SK-N-SH (cell line): ENCODE measurements at regions of chr9 and their contacts with region 1.

Region 1: DNA sequence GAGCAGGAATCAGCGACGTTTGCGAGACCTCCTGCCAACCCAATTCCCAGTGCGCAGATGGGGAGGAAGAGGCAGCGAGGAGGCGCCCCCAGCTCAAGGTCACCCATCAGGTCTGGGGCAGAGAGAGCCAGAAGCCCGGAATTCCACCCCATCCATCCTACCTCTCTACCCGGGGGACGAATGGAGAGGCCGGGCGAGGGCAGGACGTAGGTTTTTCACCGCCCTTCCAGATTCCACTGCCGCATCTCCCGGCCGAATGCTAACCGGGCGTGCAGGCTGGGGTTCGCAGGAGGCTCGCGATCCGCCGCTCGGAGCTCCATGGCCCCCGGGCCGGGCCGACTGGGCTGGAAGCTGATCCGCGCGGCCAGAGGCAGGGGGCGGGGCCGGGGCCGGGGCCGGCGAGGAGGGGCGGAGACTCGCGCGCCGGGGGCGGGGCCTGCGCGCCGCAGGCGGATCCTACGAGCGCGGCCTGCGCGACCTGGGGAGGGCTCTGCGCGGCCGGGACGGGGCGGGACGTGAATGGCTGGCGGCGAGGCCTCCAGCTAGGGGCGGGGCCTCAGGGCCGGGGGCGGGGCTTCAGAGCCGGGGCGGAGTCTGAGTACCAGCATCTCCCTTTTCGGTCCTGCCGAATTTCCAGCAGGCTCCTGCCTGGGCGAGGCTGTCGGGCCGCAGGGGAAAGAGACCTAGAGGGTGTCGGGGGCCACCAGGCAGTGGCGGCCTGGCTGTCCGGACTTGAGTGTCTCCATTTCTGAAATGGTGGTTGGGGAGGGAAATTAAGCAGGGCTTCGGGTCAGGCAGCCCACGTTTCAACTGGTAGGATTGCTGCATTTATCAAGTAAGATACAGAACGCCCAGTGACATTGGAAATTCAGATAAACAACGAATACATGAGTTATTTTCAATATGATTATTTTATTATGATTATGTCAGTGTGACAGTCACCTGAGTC is at the start of gene ST6GALNAC4:
- DNase-seq: peak; percentile 98
- H3K4me3 ChIP-seq: peak within 1 kb of the TSS; percentile 56 to 84
- H3K27ac ChIP-seq: peak within 1 kb of the TSS; percentile 58 to 95
- H3K4me1 ChIP-seq: peaks cover 20 to 35% of the 10 kb centered on the region in 2 experiments; a peak in 3 of 4 replicates
- H3K27me3 ChIP-seq: no peaks in the 10 kb centered on the region
- CTCF ChIP-seq: no peak
- EP300 ChIP-seq: no peak
- RAD21 ChIP-seq: no peak
- polyA plus RNA-seq, gene ST6GALNAC4: 28.4 and 30.2 TPM in 2 replicates

Region 2: DNA sequence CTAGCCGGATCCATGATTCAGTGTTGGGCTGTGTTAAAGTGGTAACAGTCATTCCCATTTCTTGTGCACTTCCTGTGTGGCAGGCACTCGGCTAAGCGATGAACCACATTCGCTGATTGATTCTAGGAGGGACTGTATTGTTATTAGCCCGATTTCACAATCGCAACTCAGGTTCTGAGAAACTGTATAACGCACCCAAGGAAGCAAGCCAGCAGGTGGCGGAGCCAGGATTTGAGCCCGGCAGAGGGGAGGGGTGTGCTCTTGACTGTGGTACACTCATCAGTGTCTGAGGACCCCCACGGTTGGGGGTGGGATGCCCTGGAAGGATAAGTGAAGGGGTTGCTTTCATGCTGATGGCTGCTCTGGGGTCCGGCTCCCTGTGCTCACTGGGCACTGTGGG is 430.9 kb before region 1 on chr9:
- CTCF ChIA-PET with region 1: no interaction called
- POLR2A ChIA-PET with region 1: no interaction called
- DNase-seq: no peak
- H3K4me3 ChIP-seq: no peak overlapping the region
- H3K27ac ChIP-seq: no peak overlapping the region
- H3K4me1 ChIP-seq: no peaks in the 10 kb centered on the region
- H3K27me3 ChIP-seq: no peaks in the 10 kb centered on the region
- CTCF ChIP-seq: no peak
- EP300 ChIP-seq: no peak
- RAD21 ChIP-seq: no peak

Region 3: DNA sequence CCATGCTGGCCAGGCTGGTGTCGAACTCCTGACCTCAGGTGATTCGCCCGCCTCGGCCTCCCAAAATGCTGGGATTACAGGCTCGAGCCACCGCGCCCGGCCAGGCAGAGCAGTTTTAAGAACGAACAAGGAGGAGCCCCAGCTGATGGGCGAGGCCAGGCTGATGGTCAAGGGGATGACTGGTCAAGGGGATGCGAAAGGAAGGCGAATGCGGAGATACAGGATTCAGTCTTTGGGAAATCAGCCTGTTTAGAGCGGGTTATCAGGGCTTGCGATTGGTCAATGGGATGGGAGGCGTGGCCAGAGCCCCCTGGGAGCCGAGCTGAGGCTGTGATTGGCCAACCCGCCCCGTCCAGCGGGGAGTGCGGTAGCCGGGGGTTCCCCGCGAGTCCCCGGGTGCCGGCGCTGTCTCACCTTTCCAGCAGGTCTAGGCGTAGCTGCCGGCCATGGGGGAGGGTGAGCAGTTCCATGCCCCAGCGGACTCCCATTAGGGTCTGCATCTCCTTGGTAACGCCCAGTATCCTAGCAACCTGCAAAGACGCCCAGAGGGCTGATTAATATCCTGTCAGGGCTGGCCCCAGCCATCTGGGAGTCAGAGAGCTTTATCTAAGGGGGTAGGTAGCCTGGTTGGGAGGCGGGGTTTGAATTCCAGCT is 174.4 kb before region 1 on chr9:
- CTCF ChIA-PET with region 1: interaction called, 18 read pairs
- POLR2A ChIA-PET with region 1: no interaction called
- DNase-seq: peak; percentile 81
- H3K4me3 ChIP-seq: no peak overlapping the region
- H3K27ac ChIP-seq: no peak overlapping the region
- H3K4me1 ChIP-seq: no peaks in the 10 kb centered on the region; a peak in 1 of 4 replicates
- H3K27me3 ChIP-seq: no peaks in the 10 kb centered on the region
- CTCF ChIP-seq: no peak
- EP300 ChIP-seq: no peak
- RAD21 ChIP-seq: no peak

Region 4: DNA sequence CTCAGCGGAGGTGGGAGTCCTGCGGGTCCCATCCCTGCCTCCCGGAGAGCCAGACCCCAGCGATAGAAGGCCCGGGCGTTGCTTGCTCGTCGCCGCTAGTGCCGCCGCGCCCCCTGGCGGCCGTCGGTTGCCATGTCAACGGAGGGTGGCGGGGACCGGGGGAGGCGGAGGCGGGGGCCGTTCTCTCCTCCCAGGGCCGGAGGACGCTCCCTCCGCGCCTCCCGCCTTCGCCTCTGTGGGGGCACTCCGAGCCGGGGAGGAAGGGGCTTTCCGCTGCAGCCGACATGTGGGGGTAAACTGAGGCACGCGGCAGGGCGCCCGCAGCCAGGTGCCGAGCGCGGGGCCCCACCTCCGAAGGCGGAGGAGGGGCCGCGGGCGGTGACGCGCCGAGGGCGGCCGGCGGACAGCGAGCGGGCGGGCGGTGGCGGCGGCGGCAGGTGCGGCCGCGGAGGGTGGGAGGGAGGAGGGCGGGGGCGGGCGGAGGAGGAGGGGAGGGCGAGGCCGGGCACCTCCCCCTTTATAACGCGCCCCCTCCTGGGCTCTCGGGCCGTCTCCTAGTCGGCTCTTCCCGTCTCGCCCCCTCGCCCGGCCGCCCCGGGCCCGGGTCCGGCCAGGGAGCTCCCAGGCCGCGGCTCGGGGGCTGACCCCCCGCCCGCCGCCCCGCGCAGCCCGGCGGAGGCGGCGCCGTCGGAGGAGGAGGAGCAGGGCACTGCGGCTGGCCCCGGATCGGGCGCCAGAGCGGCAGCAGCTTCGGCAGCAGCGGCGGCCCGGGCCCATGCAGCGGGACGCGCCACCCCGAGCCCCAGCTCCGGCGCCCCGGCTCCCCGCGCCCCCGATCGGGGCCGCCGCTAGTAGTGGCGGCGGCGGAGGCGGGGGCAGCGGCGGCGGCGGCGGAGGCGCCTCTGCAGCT is 131.7 kb before region 1 on chr9:
- CTCF ChIA-PET with region 1: interaction called, 24 read pairs
- POLR2A ChIA-PET with region 1: interaction called, 4 read pairs
- DNase-seq: peak; percentile 97
- H3K4me3 ChIP-seq: peak overlapping the region; percentile 82 to 90
- H3K27ac ChIP-seq: peak overlapping the region; percentile 47 to 92; a peak in 3 of 4 replicates
- H3K4me1 ChIP-seq: peaks cover 6 to 18% of the 10 kb centered on the region in 2 experiments
- H3K27me3 ChIP-seq: no peaks in the 10 kb centered on the region
- CTCF ChIP-seq: peak; percentile 79
- EP300 ChIP-seq: no peak
- RAD21 ChIP-seq: peak; percentile 80

Region 5: GRCh38 chr9:127838375-127839078 is 78.4 kb before region 1 on chr9:
- CTCF ChIA-PET with region 1: no interaction called
- POLR2A ChIA-PET with region 1: no interaction called
- DNase-seq: no peak
- H3K4me3 ChIP-seq: peak overlapping the region; percentile 12 to 40; a peak in 2 of 4 replicates
- H3K27ac ChIP-seq: peak overlapping the region; percentile 2 to 84
- H3K4me1 ChIP-seq: peaks cover 0 to 34% of the 10 kb centered on the region in 2 experiments; a peak in 3 of 4 replicates
- H3K27me3 ChIP-seq: no peaks in the 10 kb centered on the region
- CTCF ChIP-seq: no peak
- EP300 ChIP-seq: no peak; a peak in 1 of 4 replicates
- RAD21 ChIP-seq: no peak

Region 6: DNA sequence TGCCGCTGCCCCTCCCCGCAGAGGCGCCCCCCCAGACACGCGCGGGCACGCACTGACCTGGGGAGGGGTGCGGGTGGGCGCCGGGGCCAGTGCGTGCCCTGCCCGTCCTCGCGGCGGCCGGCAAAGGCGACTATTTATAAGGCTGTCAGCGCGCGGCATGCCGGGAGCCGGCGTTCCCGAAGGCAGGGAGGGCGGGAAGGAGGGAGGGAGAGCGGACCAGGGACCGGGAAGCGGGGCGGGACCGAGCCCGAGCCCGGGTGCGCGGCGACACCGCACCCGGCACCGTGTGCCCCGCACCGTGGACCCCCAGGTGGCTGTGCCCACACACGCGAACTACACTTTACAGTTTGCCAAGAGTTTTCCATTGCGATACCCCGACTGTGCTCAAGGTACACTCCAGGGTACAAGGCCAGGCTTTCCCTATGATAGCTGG is 39.4 kb before region 1 on chr9 and contains the start of gene AK1:
- CTCF ChIA-PET with region 1: interaction called, 31 read pairs
- POLR2A ChIA-PET with region 1: interaction called, 3 read pairs
- DNase-seq: peak; percentile 91
- H3K4me3 ChIP-seq: peak within 1 kb of the TSS; percentile 52 to 71
- H3K27ac ChIP-seq: peak within 1 kb of the TSS in 1 of 2 experiments; percentile 59; a peak in 1 of 4 replicates
- H3K4me1 ChIP-seq: peaks cover 9 to 39% of the 10 kb centered on the region in 2 experiments; a peak in 2 of 4 replicates
- H3K27me3 ChIP-seq: no peaks in the 10 kb centered on the region
- CTCF ChIP-seq: no peak
- EP300 ChIP-seq: no peak
- RAD21 ChIP-seq: no peak
- polyA plus RNA-seq, gene AK1: 103 and 125 TPM in 2 replicates

Region 7: DNA sequence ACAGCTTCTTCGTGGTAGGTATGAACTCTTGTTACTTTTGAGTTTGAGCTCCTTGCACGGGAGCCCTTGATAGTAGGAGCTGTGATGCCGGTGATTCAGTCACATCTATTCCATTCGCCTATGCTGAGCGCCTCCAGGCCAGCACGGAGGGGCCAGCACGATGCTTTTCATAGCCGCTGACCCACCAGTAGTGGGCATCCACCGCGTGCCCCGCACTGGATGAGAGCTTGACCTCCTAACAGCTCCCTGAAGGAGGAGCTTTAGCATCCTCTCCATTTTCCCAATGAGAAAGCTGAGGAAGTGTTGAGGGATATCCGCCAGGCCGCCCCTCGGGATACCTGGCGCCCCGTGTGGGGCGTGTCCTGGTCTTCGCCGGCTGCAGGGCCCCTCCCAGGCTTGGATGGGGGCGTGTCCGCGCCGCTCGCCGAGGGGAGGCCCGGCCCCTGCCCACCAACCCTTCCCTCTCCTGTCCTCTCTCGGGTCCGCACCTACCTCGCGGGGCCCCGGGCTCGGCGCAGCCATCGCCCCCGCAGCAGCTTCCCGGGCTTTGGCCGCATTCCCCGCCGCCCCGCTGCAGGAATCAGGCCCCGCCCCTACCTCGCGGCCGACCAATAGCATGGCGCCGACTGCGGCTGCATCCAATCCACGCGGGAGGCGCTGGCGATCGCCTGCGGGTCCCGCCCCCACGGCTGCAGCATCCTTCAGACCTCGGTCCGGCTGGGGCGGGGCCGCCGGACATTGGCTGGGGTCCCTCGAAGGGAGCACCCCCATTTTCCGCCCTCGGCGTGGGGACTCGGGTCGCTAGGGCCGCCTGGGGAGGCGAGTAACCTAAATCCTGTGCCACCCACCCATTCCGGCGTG is 13.5 kb after region 1 on chr9 and contains the start of gene PIP5KL1:
- CTCF ChIA-PET with region 1: interaction called, 13 read pairs
- POLR2A ChIA-PET with region 1: interaction called, 3 read pairs
- DNase-seq: peak; percentile 98
- H3K4me3 ChIP-seq: peak within 1 kb of the TSS; percentile 59 to 64
- H3K27ac ChIP-seq: peak within 1 kb of the TSS; percentile 80 to 91
- H3K4me1 ChIP-seq: peaks cover 7 to 31% of the 10 kb centered on the region in 2 experiments; a peak in 3 of 4 replicates
- H3K27me3 ChIP-seq: no peaks in the 10 kb centered on the region
- CTCF ChIP-seq: peak; percentile 40
- EP300 ChIP-seq: no peak
- RAD21 ChIP-seq: no peak
- polyA plus RNA-seq, gene PIP5KL1: 4.0 and 6.1 TPM in 2 replicates

Region 8: DNA sequence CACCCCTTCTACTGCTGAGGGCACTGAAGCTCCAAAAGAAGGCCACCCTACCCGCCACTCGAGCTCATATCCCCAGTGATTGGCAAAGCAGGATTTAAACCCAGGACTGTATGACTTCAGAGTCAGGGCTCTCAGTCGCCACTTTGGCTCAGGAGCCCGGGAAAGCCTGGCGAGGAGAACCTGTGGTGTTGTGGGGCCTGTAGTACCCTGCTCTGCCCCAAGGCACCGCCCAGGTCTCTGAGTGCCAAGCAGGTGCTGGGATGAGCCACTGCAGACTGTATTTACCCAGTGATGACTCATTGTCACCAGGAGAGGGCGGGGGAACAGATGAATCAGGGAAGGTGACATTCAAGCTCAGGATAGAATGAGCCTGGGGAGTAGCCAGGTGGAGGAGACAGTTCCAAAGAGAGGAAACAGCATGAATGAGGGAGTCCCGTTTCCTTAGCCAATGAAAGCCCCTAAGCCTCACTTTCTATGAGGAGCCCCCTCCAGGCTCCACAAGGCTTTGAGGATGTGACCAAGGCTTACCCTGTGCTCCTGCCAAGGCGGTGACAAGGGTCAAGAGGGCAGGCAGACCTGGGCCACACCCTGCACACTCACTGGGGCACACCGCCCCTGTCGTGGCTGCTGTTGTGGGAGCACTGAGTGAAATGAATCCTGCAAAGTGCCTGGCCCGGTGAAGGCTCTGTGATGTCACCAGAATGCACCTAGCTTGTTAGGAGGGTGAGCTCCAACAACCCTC is 38.5 kb after region 1 on chr9:
- CTCF ChIA-PET with region 1: no interaction called
- POLR2A ChIA-PET with region 1: no interaction called
- DNase-seq: peak; percentile 79
- H3K4me3 ChIP-seq: no peak overlapping the region
- H3K27ac ChIP-seq: peak overlapping the region in 1 of 2 experiments; percentile 54; a peak in 1 of 4 replicates
- H3K4me1 ChIP-seq: peaks cover 0 to 46% of the 10 kb centered on the region in 2 experiments; a peak in 2 of 4 replicates
- H3K27me3 ChIP-seq: no peaks in the 10 kb centered on the region
- CTCF ChIP-seq: no peak
- EP300 ChIP-seq: no peak
- RAD21 ChIP-seq: peak; percentile 59

Region 9: DNA sequence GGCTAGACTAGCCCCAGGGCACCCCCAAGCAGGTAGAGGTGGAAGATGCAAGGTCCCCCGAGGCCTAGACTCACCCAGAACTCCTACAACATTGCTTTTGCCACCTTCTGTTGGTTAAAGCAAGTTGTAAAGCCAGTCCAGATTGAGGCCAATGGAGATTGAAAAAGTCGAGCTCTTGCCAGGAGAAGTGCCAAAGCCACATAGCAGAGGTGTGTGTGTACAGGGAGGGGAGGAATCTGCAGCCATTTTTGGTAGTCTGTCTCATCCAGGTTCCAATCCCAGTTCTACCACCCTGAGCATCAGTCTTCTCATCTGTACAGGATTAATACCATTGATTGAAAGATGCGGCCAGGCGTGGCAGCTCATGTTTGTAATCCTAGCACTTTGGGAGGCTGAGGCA is 441.9 kb after region 1 on chr9:
- CTCF ChIA-PET with region 1: no interaction called
- POLR2A ChIA-PET with region 1: no interaction called
- DNase-seq: no peak
- H3K4me3 ChIP-seq: no peak overlapping the region
- H3K27ac ChIP-seq: no peak overlapping the region
- H3K4me1 ChIP-seq: peaks cover 7 to 8% of the 10 kb centered on the region in 2 experiments; a peak in 2 of 4 replicates
- H3K27me3 ChIP-seq: no peaks in the 10 kb centered on the region
- CTCF ChIP-seq: no peak
- EP300 ChIP-seq: no peak
- RAD21 ChIP-seq: no peak